ENCODE measurements at regions of chr6 and their contacts with region 1.

Region 1: DNA sequence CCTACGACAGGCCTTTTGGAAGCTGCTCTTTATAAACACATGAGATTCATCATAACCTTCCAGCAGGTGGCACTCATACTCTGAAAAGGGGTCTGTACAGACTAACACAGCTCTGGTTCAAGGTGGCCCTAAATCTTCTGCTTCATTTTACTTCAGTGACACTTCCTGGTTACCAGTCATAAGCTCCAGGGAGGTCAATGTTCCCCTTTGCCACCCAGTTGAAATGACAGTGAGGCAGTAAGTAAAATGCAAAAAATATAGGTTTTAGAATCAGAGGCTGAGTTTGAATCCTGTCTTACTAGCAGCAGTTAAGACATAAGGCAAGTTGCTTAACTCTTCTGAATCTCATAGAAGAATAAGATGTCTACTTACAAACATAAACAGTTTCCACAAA is 132.8 kb downstream of the CDK19 start:
- DNase-seq: no peak
- ATAC-seq: peak; percentile 99
- H3K4me3 Mint-ChIP-seq: no peak overlapping the region
- H3K27ac Mint-ChIP-seq: no peak overlapping the region
- H3K4me1 Mint-ChIP-seq: peaks cover 13% of the 10 kb centered on the region
- H3K27me3 Mint-ChIP-seq: no peaks in the 10 kb centered on the region
- CTCF ChIP-seq: no peak

Region 2: DNA sequence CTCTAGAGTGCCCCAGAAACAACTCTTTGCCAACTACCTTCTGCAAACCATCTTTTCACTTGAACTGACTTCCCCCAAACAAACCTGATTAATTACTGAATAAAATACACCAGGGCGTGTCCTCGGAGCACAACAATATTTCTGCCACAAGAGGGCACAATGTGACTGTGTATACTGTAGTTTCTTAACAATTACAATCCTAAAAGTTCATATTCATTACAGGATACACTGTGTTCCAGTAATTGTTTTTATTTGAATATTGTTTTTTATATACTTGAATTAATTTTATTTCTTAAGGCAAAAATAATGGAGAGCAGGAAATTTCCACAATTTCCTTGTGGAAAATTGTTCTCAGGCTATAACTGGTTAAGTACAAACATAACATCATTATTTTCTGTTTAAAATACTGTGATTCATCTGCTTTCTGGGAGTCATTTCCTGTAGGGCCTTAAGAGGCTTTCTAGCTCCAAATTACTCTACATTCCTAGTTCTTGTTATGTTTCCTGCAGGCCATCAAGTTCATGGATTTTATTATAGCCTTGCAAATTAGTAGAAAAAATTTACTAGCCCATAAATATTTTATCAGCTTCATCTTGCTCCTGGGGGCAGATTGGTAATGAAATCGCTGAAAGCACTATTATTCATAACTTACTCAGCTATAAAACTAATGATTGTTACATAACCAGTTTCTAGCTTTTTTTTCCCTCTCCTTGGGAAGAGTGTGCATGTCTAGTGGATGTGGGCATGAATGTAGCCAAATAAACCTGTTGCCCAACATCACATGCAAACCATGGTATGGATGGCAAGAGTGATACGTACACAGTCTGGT is 154.1 kb before region 1 on chr6:
- CTCF ChIA-PET with region 1: interaction called, 15 read pairs
- POLR2A ChIA-PET with region 1: no interaction called
- intact Hi-C with region 1: loop called (anchors 1 kb)
- DNase-seq: no peak
- ATAC-seq: peak; percentile 70
- H3K4me3 Mint-ChIP-seq: no peak overlapping the region
- H3K27ac Mint-ChIP-seq: no peak overlapping the region
- H3K4me1 Mint-ChIP-seq: no peaks in the 10 kb centered on the region
- H3K27me3 Mint-ChIP-seq: peaks cover 3% of the 10 kb centered on the region
- CTCF ChIP-seq: no peak

Region 3: GRCh38 chr6:110654096-110654820 is 28.2 kb before region 1 on chr6:
- CTCF ChIA-PET with region 1: no interaction called
- POLR2A ChIA-PET with region 1: no interaction called
- intact Hi-C with region 1: no loop called
- DNase-seq: no peak
- ATAC-seq: no peak
- H3K4me3 Mint-ChIP-seq: no peak overlapping the region
- H3K27ac Mint-ChIP-seq: no peak overlapping the region
- H3K4me1 Mint-ChIP-seq: no peaks in the 10 kb centered on the region
- H3K27me3 Mint-ChIP-seq: no peaks in the 10 kb centered on the region
- CTCF ChIP-seq: no peak

Region 4: GRCh38 chr6:110944681-110945151 is 262.3 kb after region 1 on chr6:
- CTCF ChIA-PET with region 1: interaction called, 77 read pairs
- POLR2A ChIA-PET with region 1: interaction called, 5 read pairs
- intact Hi-C with region 1: loop called (anchors 1 kb)
- DNase-seq: peak; percentile 21
- ATAC-seq: peak; percentile 94
- H3K4me3 Mint-ChIP-seq: no peak overlapping the region
- H3K27ac Mint-ChIP-seq: peak overlapping the region; percentile 82
- H3K4me1 Mint-ChIP-seq: peaks cover 6% of the 10 kb centered on the region
- H3K27me3 Mint-ChIP-seq: no peaks in the 10 kb centered on the region
- CTCF ChIP-seq: no peak

Region 5: GRCh38 chr6:110958329-110959192 is 276.1 kb after region 1 on chr6 and contains the start of gene GTF3C6:
- CTCF ChIA-PET with region 1: interaction called, 12 read pairs
- POLR2A ChIA-PET with region 1: interaction called, 16 read pairs
- intact Hi-C with region 1: loop called (anchors 2 kb)
- DNase-seq: peak; percentile 87
- ATAC-seq: peak; percentile 98
- H3K4me3 Mint-ChIP-seq: peak within 1 kb of the TSS; percentile 97
- H3K27ac Mint-ChIP-seq: peak within 1 kb of the TSS; percentile 98
- H3K4me1 Mint-ChIP-seq: peaks cover 19% of the 10 kb centered on the region
- H3K27me3 Mint-ChIP-seq: no peaks in the 10 kb centered on the region
- CTCF ChIP-seq: no peak
- total RNA-seq, gene GTF3C6: 76.7 and 93.3 TPM in 2 replicates

Region 6: GRCh38 chr6:110999634-111000270 is 317.3 kb after region 1 on chr6:
- CTCF ChIA-PET with region 1: interaction called, 12 read pairs
- POLR2A ChIA-PET with region 1: no interaction called
- intact Hi-C with region 1: loop called (anchors 1 kb)
- DNase-seq: no peak
- ATAC-seq: no peak
- H3K4me3 Mint-ChIP-seq: no peak overlapping the region
- H3K27ac Mint-ChIP-seq: no peak overlapping the region
- H3K4me1 Mint-ChIP-seq: no peaks in the 10 kb centered on the region
- H3K27me3 Mint-ChIP-seq: no peaks in the 10 kb centered on the region
- CTCF ChIP-seq: no peak